ENCODE measurements at regions of chr15 and their contacts with region 1.

Region 1: DNA sequence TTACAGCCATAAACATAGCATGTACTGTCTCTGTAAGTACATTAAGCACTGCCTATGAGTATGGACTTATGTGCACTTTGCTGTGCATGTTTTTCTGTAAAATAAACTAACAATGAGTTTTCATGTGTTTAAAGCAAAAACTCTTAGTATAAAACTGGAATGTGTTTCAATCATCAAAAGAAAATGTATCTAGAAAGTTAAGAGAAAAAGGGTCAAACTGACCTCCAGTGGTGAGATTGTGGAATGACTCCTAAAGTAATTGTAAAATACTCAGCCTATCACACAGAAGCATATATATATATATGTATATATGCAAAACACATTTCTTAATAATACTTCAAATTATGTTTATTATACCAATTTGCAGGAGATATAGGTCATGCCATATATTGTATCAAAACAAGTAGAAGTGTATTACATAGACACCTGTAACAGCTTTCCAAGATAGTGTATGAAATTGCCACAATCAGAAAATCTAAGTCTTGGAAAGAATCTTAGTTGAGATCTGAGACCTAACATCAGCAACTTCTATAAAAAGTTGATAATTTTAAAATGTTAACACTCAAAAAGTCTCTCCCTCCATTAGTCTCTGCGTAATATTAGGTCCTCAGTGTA is 199.6 kb downstream of the FMN1 start:
- DNase-seq: no peak
- H3K4me3 ChIP-seq: no peak overlapping the region
- H3K27me3 ChIP-seq: no peaks in the 10 kb centered on the region
- CTCF ChIP-seq: peak; percentile 62

Region 2: DNA sequence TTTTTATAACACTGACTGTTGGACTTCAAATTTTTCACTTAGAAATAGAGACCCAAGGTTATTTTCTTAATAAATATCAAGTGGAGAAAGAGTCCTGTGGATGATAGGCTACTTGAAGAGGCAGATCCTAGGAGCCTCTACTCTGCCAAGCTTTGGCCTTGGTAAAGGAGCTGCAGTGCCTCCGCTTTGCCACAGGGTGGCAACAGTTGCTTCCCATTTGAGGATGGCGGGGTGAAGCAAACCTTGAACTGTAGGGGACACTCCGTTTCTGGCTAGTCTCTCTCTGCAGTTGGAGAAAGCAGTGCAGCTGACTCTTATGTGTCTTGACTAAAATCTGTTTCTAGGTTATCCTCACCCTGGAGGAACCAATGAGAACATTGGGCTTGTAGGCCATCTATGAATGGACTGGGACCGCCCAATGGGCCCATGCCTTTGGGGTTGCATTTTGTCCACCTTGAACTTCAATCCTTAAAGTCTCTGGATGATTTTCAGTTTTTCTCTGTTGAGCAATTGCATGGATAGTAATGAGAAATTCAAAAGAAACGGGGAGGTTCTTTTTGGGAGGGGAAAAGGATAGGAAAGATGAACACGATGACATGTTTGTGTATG is 343.6 kb before region 1 on chr15:
- CTCF ChIA-PET with region 1: interaction called, 165 read pairs
- POLR2A ChIA-PET with region 1: no interaction called
- DNase-seq: no peak
- H3K4me3 ChIP-seq: no peak overlapping the region
- H3K27me3 ChIP-seq: no peaks in the 10 kb centered on the region; the same call in 1 of the 2 replicates
- CTCF ChIP-seq: peak; percentile 98

Region 3: GRCh38 chr15:32657198-32657883 is 337.6 kb before region 1 on chr15:
- CTCF ChIA-PET with region 1: interaction called, 165 read pairs
- POLR2A ChIA-PET with region 1: no interaction called
- DNase-seq: no peak
- H3K4me3 ChIP-seq: no peak overlapping the region
- H3K27me3 ChIP-seq: no peaks in the 10 kb centered on the region
- CTCF ChIP-seq: no peak

Region 4: GRCh38 chr15:32669896-32670619 is 324.9 kb before region 1 on chr15:
- CTCF ChIA-PET with region 1: interaction called, 11 read pairs
- POLR2A ChIA-PET with region 1: no interaction called
- DNase-seq: peak; percentile 87
- H3K4me3 ChIP-seq: peak overlapping the region; percentile 22
- H3K27me3 ChIP-seq: no peaks in the 10 kb centered on the region
- CTCF ChIP-seq: no peak

Region 5: GRCh38 chr15:32943711-32944110 is 51.2 kb before region 1 on chr15:
- CTCF ChIA-PET with region 1: no interaction called
- POLR2A ChIA-PET with region 1: no interaction called
- DNase-seq: no peak
- H3K4me3 ChIP-seq: no peak overlapping the region
- H3K27me3 ChIP-seq: no peaks in the 10 kb centered on the region
- CTCF ChIP-seq: no peak

Region 6: DNA sequence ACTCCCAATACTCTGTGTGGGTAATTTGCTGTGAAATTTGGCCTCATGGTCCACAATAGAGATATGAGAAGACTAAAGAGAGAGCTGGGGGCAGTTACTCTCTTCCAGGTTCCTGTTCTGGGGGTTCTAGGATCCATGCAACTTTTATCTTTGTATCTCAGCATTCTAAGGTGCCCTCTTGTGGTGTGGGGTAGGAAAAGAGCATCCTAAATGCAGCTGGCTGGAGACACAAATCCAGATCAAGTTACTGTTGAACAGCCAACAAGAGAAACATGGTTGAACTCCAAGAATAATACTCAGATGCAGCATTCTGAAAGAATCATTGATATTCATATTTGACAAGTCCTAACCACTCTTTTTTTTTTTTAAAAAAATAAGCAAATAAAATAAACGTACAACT is 38.9 kb before region 1 on chr15:
- CTCF ChIA-PET with region 1: interaction called, 25 read pairs
- POLR2A ChIA-PET with region 1: no interaction called
- DNase-seq: peak; percentile 31
- H3K4me3 ChIP-seq: no peak overlapping the region
- H3K27me3 ChIP-seq: no peaks in the 10 kb centered on the region
- CTCF ChIP-seq: peak; percentile 75

Region 7: GRCh38 chr15:33292717-33293307 is 297.9 kb after region 1 on chr15:
- CTCF ChIA-PET with region 1: no interaction called
- POLR2A ChIA-PET with region 1: no interaction called
- DNase-seq: no peak
- H3K4me3 ChIP-seq: no peak overlapping the region
- H3K27me3 ChIP-seq: peaks cover 8% of the 10 kb centered on the region; the same call in 1 of the 2 replicates
- CTCF ChIP-seq: peak; percentile 69

Measured in BJ (cell line).